A673 (cell line): ENCODE measurements at regions of chr4 and their contacts with region 1.

Region 1: GRCh38 chr4:186953599-186954260 is 230.1 kb upstream of the FAT1 start:
- DNase-seq: no peak
- H3K4me3 ChIP-seq: no peak overlapping the region
- H3K27ac ChIP-seq: no peak overlapping the region
- H3K4me1 ChIP-seq: no peaks in the 10 kb centered on the region
- H3K27me3 ChIP-seq: peaks cover 34% of the 10 kb centered on the region
- CTCF ChIP-seq: no peak

Region 2: GRCh38 chr4:186979961-186980745 is 26.4 kb after region 1 on chr4:
- CTCF ChIA-PET with region 1: no interaction called
- POLR2A ChIA-PET with region 1: no interaction called
- intact Hi-C with region 1: loop called (anchors 5 kb)
- DNase-seq: peak; percentile 75
- H3K4me3 ChIP-seq: peak overlapping the region; percentile 20
- H3K27ac ChIP-seq: no peak overlapping the region
- H3K4me1 ChIP-seq: peaks cover 17% of the 10 kb centered on the region
- H3K27me3 ChIP-seq: peaks cover 12% of the 10 kb centered on the region
- CTCF ChIP-seq: no peak

Region 3: GRCh38 chr4:187333151-187333550 is 379.4 kb after region 1 on chr4:
- CTCF ChIA-PET with region 1: no interaction called
- POLR2A ChIA-PET with region 1: no interaction called
- intact Hi-C with region 1: no loop called
- DNase-seq: no peak
- H3K4me3 ChIP-seq: no peak overlapping the region
- H3K27ac ChIP-seq: no peak overlapping the region
- H3K4me1 ChIP-seq: no peaks in the 10 kb centered on the region
- H3K27me3 ChIP-seq: peaks cover 52% of the 10 kb centered on the region
- CTCF ChIP-seq: no peak